H1 (cell line): ENCODE measurements at regions of chr16 and their contacts with region 1.

Region 1: GRCh38 chr16:84055366-84055765 is 12.8 kb upstream of the SLC38A8 start:
- DNase-seq: no peak
- H3K4me3 ChIP-seq: no peak overlapping the region
- H3K27ac ChIP-seq: no peak overlapping the region
- H3K4me1 ChIP-seq: no peaks in the 10 kb centered on the region
- H3K27me3 ChIP-seq: no peaks in the 10 kb centered on the region
- CTCF ChIP-seq: no peak
- EP300 ChIP-seq: no peak
- POLR2A ChIP-seq: no peak
- RAD21 ChIP-seq: no peak

Region 2: GRCh38 chr16:83971165-83972130 is 83.9 kb before region 1 on chr16:
- CTCF ChIA-PET with region 1: interaction called, 366 read pairs
- POLR2A ChIA-PET with region 1: no interaction called
- DNase-seq: no peak
- H3K4me3 ChIP-seq: no peak overlapping the region
- H3K27ac ChIP-seq: no peak overlapping the region
- H3K4me1 ChIP-seq: peaks cover 0 to 11% (median 8%) of the 10 kb centered on the region in 4 experiments; a peak in 6 of 7 replicates
- H3K27me3 ChIP-seq: peaks cover 0 to 13% (median 9%) of the 10 kb centered on the region in 4 experiments; a peak in 6 of 7 replicates
- CTCF ChIP-seq: no peak
- EP300 ChIP-seq: no peak
- POLR2A ChIP-seq: no peak
- RAD21 ChIP-seq: no peak

Region 3: DNA sequence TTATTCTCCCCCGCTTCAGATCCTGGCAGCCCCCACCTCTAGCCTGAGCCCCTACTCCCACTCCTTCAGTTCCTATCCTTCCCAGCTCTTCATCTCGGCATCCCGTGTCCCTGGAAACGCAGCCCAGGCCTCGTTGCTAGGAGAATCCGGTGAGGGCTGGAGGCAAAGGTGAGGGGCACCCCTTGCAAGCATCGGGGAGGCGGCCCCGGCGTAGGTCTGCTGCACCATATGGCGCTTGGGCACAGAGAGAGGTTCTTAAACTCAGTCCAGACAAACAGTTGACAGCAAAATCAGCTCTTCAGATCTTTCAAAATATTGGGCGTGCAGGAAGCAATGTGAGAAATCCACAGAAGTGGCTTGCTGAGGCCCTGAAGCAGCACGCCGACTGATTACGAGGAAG is 27.7 kb before region 1 on chr16:
- CTCF ChIA-PET with region 1: no interaction called
- POLR2A ChIA-PET with region 1: no interaction called
- DNase-seq: no peak
- H3K4me3 ChIP-seq: no peak overlapping the region
- H3K27ac ChIP-seq: no peak overlapping the region
- H3K4me1 ChIP-seq: peaks cover 0 to 4% (median 2%) of the 10 kb centered on the region in 4 experiments; a peak in 4 of 7 replicates
- H3K27me3 ChIP-seq: no peaks in the 10 kb centered on the region
- CTCF ChIP-seq: no peak
- EP300 ChIP-seq: no peak
- POLR2A ChIP-seq: no peak
- RAD21 ChIP-seq: no peak

Region 4: DNA sequence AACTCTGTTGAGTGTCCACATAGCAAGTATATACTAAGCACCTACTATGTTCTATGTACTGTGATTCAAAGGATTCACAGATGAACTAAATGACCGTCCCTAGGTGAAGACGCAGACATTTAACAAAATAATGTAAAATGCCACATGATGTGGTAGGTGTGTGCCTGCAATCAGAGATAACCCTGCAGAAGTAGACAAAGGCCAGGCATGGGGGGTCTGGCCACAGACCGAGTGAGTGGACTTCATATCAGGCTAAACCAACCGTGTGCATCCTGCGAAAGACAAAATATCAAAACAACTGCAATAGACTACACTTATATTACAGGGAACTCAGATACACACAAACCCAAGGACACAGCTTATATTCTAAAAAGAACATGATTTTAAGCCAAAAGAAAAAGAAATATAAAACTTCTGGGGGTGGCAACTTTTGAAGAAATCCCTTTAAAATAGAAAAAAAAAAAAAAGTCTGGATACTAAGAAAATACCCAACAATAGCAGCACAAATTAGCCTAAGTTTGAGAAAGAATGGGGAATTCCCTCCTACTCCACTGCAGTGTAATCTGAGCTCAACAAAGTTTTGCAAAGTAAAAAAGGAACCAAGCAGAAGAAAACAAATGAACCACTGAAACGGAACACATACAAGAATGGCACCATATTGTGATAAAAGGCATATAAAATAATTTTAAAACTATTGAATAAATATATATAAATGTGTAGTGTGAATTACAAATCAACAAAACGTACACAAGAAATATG is 77.3 kb after region 1 on chr16:
- CTCF ChIA-PET with region 1: no interaction called
- POLR2A ChIA-PET with region 1: no interaction called
- DNase-seq: no peak
- H3K4me3 ChIP-seq: peak overlapping the region in 1 of 4 experiments; percentile 30; a peak in 1 of 8 replicates
- H3K27ac ChIP-seq: no peak overlapping the region
- H3K4me1 ChIP-seq: peaks cover 2 to 12% (median 7%) of the 10 kb centered on the region in 4 experiments; a peak in 5 of 7 replicates
- H3K27me3 ChIP-seq: no peaks in the 10 kb centered on the region
- CTCF ChIP-seq: no peak
- EP300 ChIP-seq: no peak
- POLR2A ChIP-seq: no peak
- RAD21 ChIP-seq: no peak